ENCODE measurements at regions of chr7 and their contacts with region 1.

Region 1: DNA sequence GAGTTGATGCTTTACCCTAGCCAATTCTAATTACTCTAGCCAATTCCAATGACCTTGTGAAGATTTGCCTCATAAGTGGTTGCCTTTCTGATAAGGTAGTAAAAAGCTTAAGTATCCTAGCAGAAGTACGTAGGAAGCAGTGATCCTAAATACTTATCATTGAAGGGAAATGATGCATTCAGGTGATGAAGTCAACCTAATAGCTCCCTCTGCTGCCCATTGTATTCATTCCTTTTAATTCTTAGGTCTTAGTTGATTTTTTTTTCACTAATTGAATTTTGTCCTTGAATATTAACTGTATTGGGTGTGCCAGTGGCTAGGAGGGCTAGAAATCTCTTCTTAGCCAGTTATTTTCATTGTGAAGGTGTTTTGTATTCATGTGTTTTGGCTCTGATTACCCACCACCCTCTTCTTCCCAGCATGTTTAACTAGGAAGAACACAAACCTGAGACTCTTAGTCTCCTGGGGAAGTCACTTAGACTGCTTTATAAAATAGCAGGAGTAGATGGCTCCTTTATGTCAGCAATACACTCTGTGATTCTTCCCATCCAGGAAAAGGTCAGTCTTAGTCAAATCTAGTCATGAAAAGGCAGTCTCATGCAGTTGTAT is 46.3 kb downstream of the PLEKHA8 start:
- DNase-seq: peak; percentile 31
- H3K4me3 ChIP-seq: no peak overlapping the region
- H3K27ac ChIP-seq: no peak overlapping the region
- H3K4me1 ChIP-seq: no peaks in the 10 kb centered on the region
- H3K27me3 ChIP-seq: no peaks in the 10 kb centered on the region
- CTCF ChIP-seq: peak; percentile 34 to 58

Region 2: DNA sequence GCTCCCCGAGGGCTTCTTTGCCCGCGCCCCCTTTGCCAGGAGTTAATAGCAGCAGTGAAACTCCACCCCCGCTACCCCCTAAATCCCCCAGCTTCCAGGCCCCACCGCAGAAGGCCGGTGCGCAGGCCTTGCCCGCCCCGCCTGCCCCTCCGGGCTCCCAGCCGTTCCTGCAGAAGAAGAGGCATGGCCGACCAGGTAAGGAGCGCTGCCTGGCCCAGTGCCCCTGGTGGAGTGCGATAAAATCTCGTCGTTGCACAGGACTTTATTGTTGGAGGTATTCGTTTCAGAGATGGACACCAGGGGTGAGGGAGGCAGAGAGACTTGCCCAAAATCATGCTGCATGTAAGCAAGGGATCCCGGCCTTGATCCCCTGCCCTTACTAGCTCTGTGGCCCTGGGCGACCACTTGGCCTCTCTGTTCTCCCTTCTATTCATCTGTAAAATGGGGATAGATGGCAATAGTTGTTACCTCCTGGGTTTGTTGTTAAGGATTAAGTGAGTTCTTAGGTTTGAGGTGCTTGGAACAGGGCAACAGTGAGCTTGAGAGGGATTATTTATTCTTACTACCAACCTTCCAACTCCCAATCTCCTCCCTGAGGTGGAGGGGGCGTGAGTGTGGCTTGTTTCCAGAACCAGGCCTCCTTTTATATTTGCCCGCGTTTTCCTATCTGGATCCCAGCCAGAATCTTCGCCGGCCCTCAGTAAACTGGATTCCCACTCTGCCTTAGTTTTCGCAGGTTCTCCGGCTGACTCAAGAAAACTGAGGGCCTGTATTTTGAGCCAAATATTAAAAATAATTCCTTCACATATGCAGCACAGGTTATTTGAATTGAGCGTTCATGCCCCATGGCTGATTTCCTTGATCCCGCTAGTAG is 189.9 kb before region 1 on chr7:
- CTCF ChIA-PET with region 1: no interaction called
- dilution Hi-C with region 1: no loop called
- in situ Hi-C with region 1: loop called in 1 of 2 experiments (anchors 10 kb)
- intact Hi-C with region 1: no loop called
- DNase-seq: no peak
- H3K4me3 ChIP-seq: peak overlapping the region in 1 of 3 experiments; percentile 38
- H3K27ac ChIP-seq: no peak overlapping the region
- H3K4me1 ChIP-seq: no peaks in the 10 kb centered on the region
- H3K27me3 ChIP-seq: no peaks in the 10 kb centered on the region
- CTCF ChIP-seq: no peak

Region 3: DNA sequence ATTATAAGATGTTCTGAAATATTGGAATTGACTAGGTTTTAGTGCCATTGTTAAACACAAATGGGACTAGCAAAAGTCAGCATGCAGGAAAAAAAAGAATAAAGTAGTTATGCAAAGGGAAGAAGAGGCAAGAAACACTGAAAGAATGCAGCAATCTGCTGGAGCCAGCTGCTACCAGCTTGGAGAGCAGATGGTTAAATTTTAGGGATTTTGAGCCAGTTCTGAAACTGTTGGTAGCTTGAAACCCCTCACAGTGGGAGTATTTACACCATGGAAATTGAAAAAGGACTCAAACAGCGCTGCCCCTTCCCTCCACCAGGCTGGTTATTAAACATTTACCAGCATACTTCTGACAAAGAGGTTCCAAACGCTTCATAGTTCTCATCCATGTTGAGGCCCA is 125.9 kb before region 1 on chr7:
- CTCF ChIA-PET with region 1: interaction called, 26 read pairs
- dilution Hi-C with region 1: no loop called
- in situ Hi-C with region 1: no loop called
- intact Hi-C with region 1: loop called (anchors 5 kb)
- DNase-seq: no peak
- H3K4me3 ChIP-seq: no peak overlapping the region
- H3K27ac ChIP-seq: no peak overlapping the region
- H3K4me1 ChIP-seq: peaks cover 13% of the 10 kb centered on the region
- H3K27me3 ChIP-seq: no peaks in the 10 kb centered on the region
- CTCF ChIP-seq: no peak